Psoas muscle (tissue), 8 donors: ENCODE measurements at regions of chr2 and their contacts with region 1.

Region 1: DNA sequence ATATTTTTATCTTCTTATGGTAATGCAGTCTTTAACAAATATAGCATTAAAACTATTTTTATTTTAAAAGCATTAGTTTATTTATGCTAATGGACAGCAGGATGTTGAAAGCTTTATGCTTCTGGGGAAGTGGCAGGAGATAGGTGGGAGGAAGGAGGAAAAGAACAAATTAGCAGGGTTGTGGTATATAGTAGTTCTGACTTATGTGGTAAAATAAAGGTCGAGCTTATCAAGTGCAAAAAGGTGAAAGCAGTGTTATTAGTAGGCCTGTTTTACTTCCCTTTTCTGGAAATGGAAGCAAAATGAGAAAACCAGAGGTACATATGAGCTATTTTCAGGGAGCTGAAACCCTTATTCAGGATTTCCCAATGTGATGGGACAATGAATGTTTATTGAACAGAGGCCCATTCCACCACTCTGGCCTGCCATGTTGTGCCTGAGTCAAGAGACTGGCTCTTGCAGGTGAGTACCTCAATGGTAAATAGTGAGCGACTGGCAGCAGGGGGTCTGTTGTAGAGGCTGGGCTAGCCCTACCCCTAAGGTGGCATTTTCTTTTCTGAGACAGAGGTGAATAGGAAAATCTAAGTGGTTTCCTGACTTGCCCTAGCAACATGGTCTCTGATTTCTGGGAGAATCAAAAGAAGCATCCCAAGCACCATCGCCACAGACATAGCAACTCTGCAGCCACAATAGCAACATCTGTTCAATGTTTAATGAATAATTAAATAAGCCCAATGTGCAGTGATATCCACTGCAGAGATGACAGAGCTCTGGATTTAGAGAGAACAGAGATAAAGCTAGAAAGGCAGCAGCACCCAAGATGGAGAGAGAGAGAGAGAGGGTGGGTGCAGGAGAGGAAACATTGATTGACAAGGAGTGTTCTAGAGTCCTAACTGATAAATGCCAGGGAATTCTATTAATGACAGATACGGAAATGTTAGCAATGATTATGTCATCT is 119.7 kb downstream of the UPP2 start:
- DNase-seq: no peak
- ATAC-seq: no peak
- H3K4me3 ChIP-seq: no peak overlapping the region
- H3K27ac ChIP-seq: no peak overlapping the region
- H3K4me1 ChIP-seq: no peaks in the 10 kb centered on the region
- H3K27me3 ChIP-seq: peaks cover 0 to 2% (median 0%) of the 10 kb centered on the region in 3 donors
- CTCF ChIP-seq: no peak

Region 2: DNA sequence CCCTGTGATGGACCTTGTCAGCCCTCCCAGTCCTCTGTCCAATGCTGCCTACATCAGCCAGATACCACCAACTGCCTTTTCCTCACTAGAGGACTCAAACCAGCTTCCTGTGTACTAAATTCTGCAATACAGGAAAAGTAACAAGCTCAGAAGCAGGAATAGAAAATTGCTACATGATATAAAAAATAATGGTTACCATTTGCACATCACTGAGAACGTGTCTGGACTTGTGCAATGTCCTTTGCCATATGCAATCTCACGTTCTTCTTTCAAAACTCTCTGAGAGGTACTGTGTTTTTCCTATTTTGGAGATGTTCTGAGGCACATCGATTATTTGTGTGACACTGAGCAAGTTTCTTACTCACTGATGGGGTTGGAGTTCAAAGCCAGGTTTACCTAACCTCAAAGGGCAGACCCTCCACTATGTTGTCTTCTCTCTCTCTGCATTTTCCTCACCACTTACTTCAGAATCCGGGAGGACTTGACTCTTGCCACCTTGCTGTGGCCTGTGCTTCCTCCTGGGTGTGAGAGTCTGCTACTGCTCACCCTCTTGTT is 107.5 kb before region 1 on chr2:
- intact Hi-C with region 1: no loop called
- DNase-seq: no peak
- ATAC-seq: no peak
- H3K4me3 ChIP-seq: no peak overlapping the region
- H3K27ac ChIP-seq: no peak overlapping the region
- H3K4me1 ChIP-seq: no peaks in the 10 kb centered on the region
- H3K27me3 ChIP-seq: no peaks in the 10 kb centered on the region
- CTCF ChIP-seq: no peak

Region 3: GRCh38 chr2:158359839-158360238 is 138.5 kb after region 1 on chr2:
- intact Hi-C with region 1: loop called in 1 of 2 experiments (anchors 10 kb)
- DNase-seq: no peak
- ATAC-seq: no peak
- H3K4me3 ChIP-seq: no peak overlapping the region
- H3K27ac ChIP-seq: no peak overlapping the region
- H3K4me1 ChIP-seq: no peaks in the 10 kb centered on the region
- H3K27me3 ChIP-seq: no peaks in the 10 kb centered on the region
- CTCF ChIP-seq: no peak

Region 4: DNA sequence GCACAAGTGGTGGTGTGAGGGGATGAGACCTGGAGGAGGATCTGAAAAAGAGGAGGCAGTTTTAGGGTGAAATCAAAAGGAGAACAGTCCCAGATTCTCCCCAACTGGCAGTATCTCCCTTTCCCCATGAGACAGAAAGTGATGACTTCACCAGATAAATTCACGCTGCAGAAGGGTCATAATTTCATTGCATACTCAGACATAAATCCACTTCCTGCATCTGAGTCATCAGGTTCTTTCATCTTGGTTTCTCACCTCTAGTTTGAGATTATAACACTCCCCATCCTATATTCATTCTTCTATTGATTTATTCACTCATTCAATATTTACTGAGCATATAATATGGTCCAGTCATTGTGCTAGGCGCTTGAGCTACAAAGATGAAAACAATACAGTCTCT is 170.5 kb after region 1 on chr2:
- intact Hi-C with region 1: no loop called
- DNase-seq: no peak
- ATAC-seq: no peak
- H3K4me3 ChIP-seq: no peak overlapping the region
- H3K27ac ChIP-seq: no peak overlapping the region
- H3K4me1 ChIP-seq: no peaks in the 10 kb centered on the region
- H3K27me3 ChIP-seq: peaks cover 0 to 2% (median 0%) of the 10 kb centered on the region in 3 donors
- CTCF ChIP-seq: no peak

Region 5: DNA sequence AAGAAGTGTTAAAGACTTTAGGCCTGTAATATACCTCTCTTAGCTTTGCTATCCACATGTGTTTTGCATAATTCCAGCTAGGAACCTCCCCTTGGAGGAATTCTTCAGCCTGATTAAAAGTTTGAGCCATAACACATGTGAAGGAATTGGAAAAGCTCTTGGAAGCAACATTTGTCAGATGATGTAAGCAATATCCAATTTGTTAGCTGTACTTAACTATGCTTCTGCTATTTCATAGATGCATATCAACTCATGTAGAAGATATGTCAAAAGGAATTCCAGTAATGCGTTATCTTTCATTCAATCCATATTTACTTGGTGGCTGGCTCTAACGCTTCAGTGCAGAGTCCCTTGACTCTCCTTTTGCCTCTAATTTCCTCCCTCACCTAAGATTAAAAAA is 281.6 kb after region 1 on chr2:
- intact Hi-C with region 1: no loop called
- DNase-seq: no peak
- ATAC-seq: no peak
- H3K4me3 ChIP-seq: no peak overlapping the region
- H3K27ac ChIP-seq: no peak overlapping the region
- H3K4me1 ChIP-seq: no peaks in the 10 kb centered on the region
- H3K27me3 ChIP-seq: no peaks in the 10 kb centered on the region
- CTCF ChIP-seq: no peak